Posterior vena cava (tissue), 2 donors: ENCODE measurements at regions of chr2 and their contacts with region 1.

Region 1: GRCh38 chr2:197515739-197516392 is at the start of gene MOB4:
- DNase-seq: peak; percentile 99
- total RNA-seq, gene MOB4: 35.1 to 55.4 TPM

Region 2: DNA sequence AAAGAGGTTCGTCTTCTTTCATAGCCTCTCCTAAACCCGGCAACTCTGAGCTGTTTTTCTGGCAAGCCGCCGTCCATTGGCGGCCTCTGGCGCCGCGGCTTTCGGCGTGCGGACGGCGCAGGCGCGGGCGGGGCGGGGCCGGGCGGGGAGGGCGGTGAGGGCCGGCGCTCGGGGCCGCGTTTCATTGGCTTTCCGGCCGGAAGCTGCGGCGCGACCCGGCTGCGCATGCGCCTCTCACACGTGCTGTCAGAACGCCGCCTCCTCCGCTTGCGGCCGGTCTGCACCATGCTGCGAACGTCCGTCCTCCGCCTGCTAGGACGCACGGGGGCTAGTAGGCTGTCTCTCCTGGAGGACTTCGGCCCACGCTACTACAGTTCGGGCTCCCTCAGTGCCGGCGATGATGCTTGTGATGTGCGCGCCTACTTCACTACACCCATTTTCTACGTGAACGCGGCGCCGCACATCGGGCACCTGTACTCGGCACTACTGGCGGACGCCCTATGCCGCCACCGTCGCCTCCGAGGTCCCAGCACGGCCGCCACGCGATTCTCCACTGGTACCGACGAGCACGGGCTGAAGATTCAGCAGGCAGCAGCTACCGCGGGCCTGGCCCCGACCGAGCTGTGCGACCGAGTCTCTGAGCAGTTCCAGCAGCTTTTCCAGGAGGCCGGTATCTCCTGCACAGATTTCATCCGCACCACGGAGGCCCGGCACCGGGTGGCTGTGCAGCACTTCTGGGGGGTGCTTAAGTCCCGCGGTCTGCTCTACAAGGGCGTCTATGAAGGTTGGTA is 189.4 kb after region 1 on chr2 and contains the start of gene MARS2:
- intact Hi-C with region 1: loop called in 1 of 2 experiments (anchors 10 kb)
- DNase-seq: peak; percentile 99
- total RNA-seq, gene MARS2: 3.4 to 3.5 TPM

Region 3: DNA sequence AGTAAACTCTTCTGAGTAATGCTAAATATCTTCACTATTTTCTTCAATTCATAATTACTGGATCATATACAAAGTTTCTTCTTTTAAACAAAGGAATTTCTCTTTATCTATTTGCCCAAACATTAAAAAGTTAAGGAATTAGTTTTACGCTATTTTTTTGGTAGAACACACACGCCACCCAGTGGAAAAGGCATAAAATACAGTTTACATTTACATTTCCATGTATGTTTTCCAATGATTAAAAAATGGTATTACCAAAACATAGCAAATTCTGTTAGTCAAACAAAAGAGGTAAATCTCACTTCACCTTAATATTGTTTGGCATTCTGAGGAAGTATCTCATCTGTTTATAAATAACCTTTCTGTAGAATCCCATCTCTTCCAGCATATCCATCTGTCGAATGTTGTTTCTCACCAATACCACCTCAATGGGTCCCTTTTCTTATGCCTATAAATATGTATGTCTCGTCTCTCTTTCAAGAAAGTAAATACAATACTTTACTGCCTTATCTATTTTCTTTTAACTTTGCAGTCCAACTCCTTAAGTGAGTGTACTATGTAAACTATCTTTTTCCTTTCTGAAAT is 262.0 kb after region 1 on chr2:
- intact Hi-C with region 1: loop called in 1 of 2 experiments (anchors 10 kb)
- DNase-seq: no peak